Dorsolateral prefrontal cortex (tissue), 120 donors: ENCODE measurements at regions of chr1 and their contacts with region 1.

Region 1: GRCh38 chr1:156414461-156415064 is 45.6 kb downstream of the RHBG start:
- DNase-seq: no peak
- H3K4me3 ChIP-seq: peak overlapping the region in 23 of 59 donors; percentile 4 to 79 (median 39)
- H3K27ac ChIP-seq: peak overlapping the region in 57 of 59 donors; percentile 2 to 100 (median 99)
- H3K27me3 ChIP-seq: peaks cover 0 to 14% (median 0%) of the 10 kb centered on the region in 45 donors
- CTCF ChIP-seq: peak in 1 of 56 donors; percentile 9

Region 2: GRCh38 chr1:156368889-156369684 is 45.5 kb before region 1 on chr1 and contains the start of gene RHBG:
- intact Hi-C with region 1: no loop called
- DNase-seq: peak in 1 of 10 donors; percentile 81
- H3K4me3 ChIP-seq: peak within 1 kb of the TSS; percentile 13 to 67 (median 46)
- H3K27ac ChIP-seq: peak within 1 kb of the TSS in 1 of 59 donors; percentile 58
- H3K27me3 ChIP-seq: peaks cover 0 to 18% (median 0%) of the 10 kb centered on the region in 45 donors
- CTCF ChIP-seq: no peak
- total RNA-seq, gene RHBG: 0.33 to 0.61 (median 0.44) TPM in 5 of 120 experiments, not detected in the others

Region 3: DNA sequence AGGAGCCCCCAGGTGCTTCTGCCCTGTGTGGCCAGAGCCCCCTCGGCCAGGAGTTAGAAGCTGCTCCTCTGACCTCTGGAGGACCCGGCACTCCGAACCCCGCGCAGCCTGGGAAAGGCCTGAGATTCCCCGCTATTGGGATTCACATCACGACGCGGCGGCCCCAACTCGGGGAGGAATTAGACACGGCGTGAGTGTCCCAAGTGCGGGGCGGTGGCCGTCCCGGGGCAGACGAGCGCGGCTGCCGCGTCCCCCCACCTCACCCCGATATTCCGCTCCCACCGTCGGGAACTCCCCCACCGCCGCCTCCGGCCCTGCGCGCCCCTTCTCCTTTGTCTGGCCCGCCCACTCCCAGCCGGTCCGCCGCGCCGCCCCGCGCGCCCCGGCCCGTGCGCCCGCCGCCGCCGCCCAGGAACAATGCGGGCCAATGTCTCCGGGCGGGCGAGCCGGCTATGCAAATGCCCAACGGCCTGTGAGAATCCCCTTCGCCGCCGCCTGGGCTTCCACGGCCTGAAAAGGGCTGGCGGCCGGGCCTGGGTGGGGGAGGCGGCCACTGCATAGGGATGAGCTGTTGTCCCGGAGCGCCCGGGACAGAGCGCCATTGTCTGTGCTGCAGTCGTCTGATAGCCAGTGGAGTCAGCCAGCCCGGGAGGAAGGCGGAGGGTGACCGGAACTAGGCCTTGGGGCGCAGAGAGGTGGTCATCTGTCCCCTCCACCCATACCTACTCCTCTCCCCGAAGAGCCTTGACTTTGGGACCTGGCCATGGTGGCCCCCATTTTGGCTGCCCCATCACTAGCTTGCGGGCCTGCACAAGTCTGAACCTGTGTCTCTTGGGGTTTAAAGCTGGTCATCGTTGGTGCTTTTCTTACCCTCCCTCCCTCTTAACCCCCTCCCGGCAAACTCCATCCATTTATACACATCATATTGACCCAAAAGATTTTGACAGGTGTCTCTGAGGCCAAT is 26.1 kb before region 1 on chr1:
- intact Hi-C with region 1: loop called (anchors 1 kb)
- DNase-seq: peak; percentile 61 to 96 (median 94)
- H3K4me3 ChIP-seq: peak overlapping the region in 55 of 59 donors; percentile 9 to 64 (median 45)
- H3K27ac ChIP-seq: peak overlapping the region; percentile 11 to 99 (median 95)
- H3K27me3 ChIP-seq: peaks cover 0 to 5% (median 0%) of the 10 kb centered on the region in 45 donors
- CTCF ChIP-seq: peak in 11 of 56 donors; percentile 6 to 47 (median 24)

Region 4: GRCh38 chr1:156445789-156446263 is 31.3 kb after region 1 on chr1:
- intact Hi-C with region 1: loop called in 1 of 2 experiments (anchors 2 kb)
- DNase-seq: peak; percentile 78 to 90 (median 85)
- H3K4me3 ChIP-seq: peak overlapping the region in 23 of 59 donors; percentile 0 to 43 (median 27)
- H3K27ac ChIP-seq: peak overlapping the region in 7 of 59 donors; percentile 0 to 55 (median 34)
- H3K27me3 ChIP-seq: peaks cover 0 to 11% (median 0%) of the 10 kb centered on the region in 45 donors
- CTCF ChIP-seq: peak; percentile 83 to 100 (median 98)